PC-9 (cell line): ENCODE measurements at regions of chr6 and their contacts with region 1.

Region 1: GRCh38 chr6:112835078-112835477 is 487.9 kb downstream of the RFPL4B start:
- DNase-seq: no peak
- H3K4me3 ChIP-seq: no peak overlapping the region
- H3K27ac ChIP-seq: no peak overlapping the region
- H3K4me1 ChIP-seq: no peaks in the 10 kb centered on the region
- H3K27me3 ChIP-seq: no peaks in the 10 kb centered on the region
- CTCF ChIP-seq: no peak

Region 2: DNA sequence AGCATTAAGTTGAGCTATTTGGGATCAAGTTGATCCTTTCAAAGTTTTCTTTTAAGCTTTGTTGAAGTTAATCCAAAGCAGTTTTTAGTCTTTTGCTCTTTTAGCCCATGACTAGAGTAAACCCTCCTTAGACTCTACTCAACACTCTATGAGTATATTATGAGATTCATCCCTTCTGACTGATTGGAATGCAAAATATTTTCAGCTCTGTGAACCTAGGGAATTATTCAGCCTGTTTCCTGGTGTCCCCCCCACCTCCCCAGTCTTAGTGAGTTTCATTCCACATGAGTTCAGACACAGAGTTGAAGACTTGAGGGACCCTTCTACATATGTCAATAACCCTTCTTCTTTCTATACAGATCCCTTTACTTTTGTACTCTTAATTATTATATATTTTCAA is 74.2 kb before region 1 on chr6:
- CTCF ChIA-PET with region 1: no interaction called
- POLR2A ChIA-PET with region 1: no interaction called
- intact Hi-C with region 1: no loop called
- DNase-seq: no peak
- H3K4me3 ChIP-seq: no peak overlapping the region
- H3K27ac ChIP-seq: no peak overlapping the region
- H3K4me1 ChIP-seq: no peaks in the 10 kb centered on the region
- H3K27me3 ChIP-seq: no peaks in the 10 kb centered on the region
- CTCF ChIP-seq: no peak

Region 3: GRCh38 chr6:112851146-112851545 is 16.1 kb after region 1 on chr6:
- CTCF ChIA-PET with region 1: no interaction called
- POLR2A ChIA-PET with region 1: interaction called, 11 read pairs
- intact Hi-C with region 1: no loop called
- DNase-seq: no peak
- H3K4me3 ChIP-seq: no peak overlapping the region
- H3K27ac ChIP-seq: no peak overlapping the region
- H3K4me1 ChIP-seq: no peaks in the 10 kb centered on the region
- H3K27me3 ChIP-seq: no peaks in the 10 kb centered on the region
- CTCF ChIP-seq: no peak